ENCODE measurements at regions of chr22 and their contacts with region 1.

Region 1: GRCh38 chr22:28829358-28830181 is 29.2 kb upstream of the XBP1 start:
- DNase-seq: peak; percentile 84
- ATAC-seq: peak; percentile 72
- H3K4me3 Mint-ChIP-seq: no peak overlapping the region
- H3K27ac Mint-ChIP-seq: no peak overlapping the region
- H3K4me1 Mint-ChIP-seq: peaks cover 18% of the 10 kb centered on the region
- H3K27me3 Mint-ChIP-seq: no peaks in the 10 kb centered on the region
- CTCF ChIP-seq: peak; percentile 98

Region 2: GRCh38 chr22:28600546-28601143 is 228.9 kb before region 1 on chr22:
- CTCF ChIA-PET with region 1: interaction called, 79 read pairs
- POLR2A ChIA-PET with region 1: interaction called, 4 read pairs
- intact Hi-C with region 1: loop called (anchors 5 kb)
- DNase-seq: no peak
- ATAC-seq: no peak
- H3K4me3 Mint-ChIP-seq: no peak overlapping the region
- H3K27ac Mint-ChIP-seq: no peak overlapping the region
- H3K4me1 Mint-ChIP-seq: no peaks in the 10 kb centered on the region
- H3K27me3 Mint-ChIP-seq: peaks cover 18% of the 10 kb centered on the region
- CTCF ChIP-seq: peak; percentile 80

Region 3: DNA sequence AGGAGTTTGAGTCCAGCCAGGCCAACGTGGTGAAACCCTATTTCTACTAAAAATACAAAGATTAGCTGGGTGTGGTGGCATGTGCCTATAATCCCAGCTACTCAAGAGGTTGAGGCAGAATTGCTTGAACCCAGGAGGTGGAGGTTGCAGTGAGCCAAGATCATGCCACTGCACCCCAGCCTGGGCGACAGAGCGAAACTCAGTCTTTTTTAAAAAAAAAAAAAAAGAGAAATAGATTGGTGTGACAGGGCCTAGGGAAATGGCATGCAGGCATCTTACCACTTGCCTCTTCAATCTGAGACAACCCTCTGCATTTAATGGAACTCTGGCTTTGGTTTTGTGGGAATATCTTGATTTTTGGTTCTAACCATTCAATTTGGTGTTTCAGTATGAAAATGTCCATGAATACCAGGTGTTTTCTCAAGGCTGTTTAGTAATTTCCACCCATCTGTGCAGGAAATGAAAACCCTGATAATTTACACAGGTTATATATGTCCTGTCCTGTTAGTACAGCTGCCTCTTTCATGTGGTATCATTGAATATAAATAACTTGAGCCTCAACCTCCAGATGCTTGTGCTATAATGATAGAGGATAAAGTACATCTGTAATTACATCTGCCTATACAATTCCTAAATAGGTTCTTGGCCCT is 37.6 kb before region 1 on chr22:
- CTCF ChIA-PET with region 1: interaction called, 32 read pairs
- POLR2A ChIA-PET with region 1: interaction called, 8 read pairs
- intact Hi-C with region 1: no loop called
- DNase-seq: no peak
- ATAC-seq: peak; percentile 32
- H3K4me3 Mint-ChIP-seq: no peak overlapping the region
- H3K27ac Mint-ChIP-seq: peak overlapping the region; percentile 69
- H3K4me1 Mint-ChIP-seq: peaks cover 54% of the 10 kb centered on the region
- H3K27me3 Mint-ChIP-seq: no peaks in the 10 kb centered on the region
- CTCF ChIP-seq: no peak

Region 4: DNA sequence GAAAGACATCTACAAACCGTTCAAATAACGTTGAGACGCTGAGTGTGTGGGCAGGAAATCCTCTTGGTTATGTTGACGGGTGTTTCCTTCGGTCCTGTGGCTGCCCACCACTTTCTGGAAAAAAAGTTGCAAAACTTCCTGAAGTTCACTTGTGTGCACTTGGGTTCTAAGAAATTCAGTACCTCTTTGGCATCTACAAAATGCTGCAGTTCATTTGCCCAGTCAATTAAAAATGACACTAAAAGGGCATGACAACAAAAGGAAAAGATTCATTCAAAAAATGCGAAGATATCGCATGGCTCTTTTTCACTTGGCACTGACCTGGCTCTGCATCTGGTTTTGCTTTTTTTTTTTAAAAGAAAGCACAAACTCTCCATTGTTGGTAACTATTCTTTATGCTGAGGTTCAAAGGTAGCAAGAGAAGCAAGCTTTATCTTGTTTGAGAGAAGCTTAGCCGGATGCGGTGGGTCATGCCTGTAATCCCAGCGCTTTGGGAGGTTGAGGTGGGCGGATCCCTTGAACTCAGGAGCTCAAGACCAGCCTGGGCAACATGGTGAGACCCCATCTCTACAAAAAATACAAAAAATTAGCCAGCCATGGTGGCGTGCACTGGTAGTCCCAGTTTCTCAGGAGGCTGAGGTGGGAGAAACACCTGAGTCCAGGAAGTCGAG is 18.6 kb before region 1 on chr22:
- CTCF ChIA-PET with region 1: interaction called, 38 read pairs
- POLR2A ChIA-PET with region 1: no interaction called
- intact Hi-C with region 1: no loop called
- DNase-seq: peak; percentile 66
- ATAC-seq: peak; percentile 28
- H3K4me3 Mint-ChIP-seq: peak overlapping the region; percentile 65
- H3K27ac Mint-ChIP-seq: peak overlapping the region; percentile 83
- H3K4me1 Mint-ChIP-seq: peaks cover 62% of the 10 kb centered on the region
- H3K27me3 Mint-ChIP-seq: no peaks in the 10 kb centered on the region
- CTCF ChIP-seq: no peak

Region 5: GRCh38 chr22:28917747-28918549 is 88.4 kb after region 1 on chr22:
- CTCF ChIA-PET with region 1: no interaction called
- POLR2A ChIA-PET with region 1: no interaction called
- intact Hi-C with region 1: no loop called
- DNase-seq: no peak
- ATAC-seq: no peak
- H3K4me3 Mint-ChIP-seq: no peak overlapping the region
- H3K27ac Mint-ChIP-seq: no peak overlapping the region
- H3K4me1 Mint-ChIP-seq: peaks cover 15% of the 10 kb centered on the region
- H3K27me3 Mint-ChIP-seq: peaks cover 40% of the 10 kb centered on the region
- CTCF ChIP-seq: no peak

Region 6: DNA sequence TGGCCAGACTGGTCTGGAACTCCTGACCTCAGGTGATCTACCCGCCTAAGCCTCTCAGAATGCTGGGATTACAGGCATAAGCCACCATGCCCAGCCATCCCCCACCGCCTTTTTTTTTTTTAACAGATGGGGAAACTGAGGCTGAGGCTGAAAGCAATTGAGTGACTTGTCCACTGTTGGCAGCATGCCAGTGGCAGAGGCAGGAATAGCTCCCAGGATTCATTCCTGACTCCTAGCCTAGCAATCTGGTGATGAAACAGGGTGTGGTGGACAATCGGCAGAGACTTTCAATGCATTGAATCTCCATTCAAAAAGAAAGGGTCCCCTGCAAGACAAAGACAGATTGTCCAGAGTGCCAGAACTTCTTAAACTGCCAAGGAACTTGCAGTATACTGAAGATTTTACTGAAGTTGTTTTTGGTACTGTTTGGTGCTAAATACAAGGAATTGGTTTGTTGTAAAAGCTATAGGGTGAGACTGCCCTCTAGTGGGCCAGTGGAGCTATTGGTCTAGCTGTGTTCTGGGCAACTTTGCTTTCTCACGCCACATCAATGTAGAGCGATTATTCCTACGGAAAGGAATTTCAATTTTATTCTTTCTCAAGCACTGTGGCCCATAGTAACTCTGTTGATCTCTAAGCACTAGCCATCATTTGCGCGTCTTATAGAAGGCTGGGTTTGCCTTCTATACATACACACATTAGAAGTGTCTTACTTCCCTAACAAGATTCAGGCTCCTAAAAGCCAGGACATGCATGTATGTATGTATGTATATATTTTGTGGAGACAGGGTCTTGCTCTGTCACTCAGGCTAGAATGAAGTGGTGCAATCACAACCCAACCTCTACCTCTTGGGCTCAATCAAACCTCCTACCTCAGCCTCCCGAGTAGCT is 211.1 kb after region 1 on chr22:
- CTCF ChIA-PET with region 1: interaction called, 25 read pairs
- POLR2A ChIA-PET with region 1: no interaction called
- intact Hi-C with region 1: no loop called
- DNase-seq: peak; percentile 77
- ATAC-seq: peak; percentile 75
- H3K4me3 Mint-ChIP-seq: no peak overlapping the region
- H3K27ac Mint-ChIP-seq: no peak overlapping the region
- H3K4me1 Mint-ChIP-seq: no peaks in the 10 kb centered on the region
- H3K27me3 Mint-ChIP-seq: peaks cover 2% of the 10 kb centered on the region
- CTCF ChIP-seq: peak; percentile 96

Measured in activated CD8-positive, alpha-beta T cell treated with anti-CD3 and anti-CD28 coated beads for 36 hours (primary cell).